Head of caudate nucleus (tissue), 42 donors: ENCODE measurements at regions of chr4 and their contacts with region 1.

Region 1: GRCh38 chr4:16001484-16001858 is 38.5 kb upstream of the FGFBP2 start:
- DNase-seq: peak in 41 of 42 donors; percentile 33 to 86 (median 65)

Region 2: DNA sequence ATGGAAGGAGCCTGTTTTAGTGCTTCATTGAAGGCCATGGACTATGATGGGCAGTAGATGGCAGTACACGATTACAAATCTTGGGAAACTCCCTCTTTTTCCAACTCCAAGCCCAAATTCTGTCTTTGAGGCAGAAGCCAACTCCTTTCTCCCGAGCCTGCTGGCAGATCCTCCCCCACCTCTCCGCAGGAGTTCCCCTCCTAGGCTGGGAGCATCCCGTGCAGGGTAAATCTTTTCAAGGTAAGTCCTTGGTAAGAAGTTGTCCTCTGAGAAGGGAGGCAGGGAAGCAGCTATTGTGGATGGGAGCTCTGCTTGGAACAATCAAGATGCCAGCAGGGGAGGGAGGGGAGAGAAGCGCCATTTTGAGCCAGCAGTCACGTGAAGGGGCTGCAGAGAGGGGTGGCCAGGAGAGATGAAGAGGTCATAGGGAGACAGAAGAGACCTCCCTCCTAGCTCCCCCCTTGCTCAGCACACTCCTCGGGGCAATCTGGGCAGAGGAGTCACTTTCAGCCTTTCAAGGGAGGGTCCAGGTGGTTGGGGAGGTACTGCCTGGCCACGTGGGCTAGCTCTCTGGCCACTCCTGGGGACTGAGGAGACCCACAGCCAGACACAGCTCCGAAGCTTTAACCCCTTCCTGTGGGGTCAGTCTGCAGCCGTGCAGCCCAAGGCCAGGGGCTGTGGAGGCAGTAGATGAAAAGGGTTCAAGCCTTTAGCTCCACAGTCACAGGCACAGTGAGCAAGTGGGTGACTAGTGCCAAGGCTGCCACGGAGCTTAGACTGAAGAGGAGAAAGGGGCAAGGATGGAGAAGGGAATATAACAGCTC is 522.2 kb before region 1 on chr4:
- intact Hi-C with region 1: loop called (anchors 5 kb)
- DNase-seq: peak; percentile 42 to 89 (median 70)

Region 3: DNA sequence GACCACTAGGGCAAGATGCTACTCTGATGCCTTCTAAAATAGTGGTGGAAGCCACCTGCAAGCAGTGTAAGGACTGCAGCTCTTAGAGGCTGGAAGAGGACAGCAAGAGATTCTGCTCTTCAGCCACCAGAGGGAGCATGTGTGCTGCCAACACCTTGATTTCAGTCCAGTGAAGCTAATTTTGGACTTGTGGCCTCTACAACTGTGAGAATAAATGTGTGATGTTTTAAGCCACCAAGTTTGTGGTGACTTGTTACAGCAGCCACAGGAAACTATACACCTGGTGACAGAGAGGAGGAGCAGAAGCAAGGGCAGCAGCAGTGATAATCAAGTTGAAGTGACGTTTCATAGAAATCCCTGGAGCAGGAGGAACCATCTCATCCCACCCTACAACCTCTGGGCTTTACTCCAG is 118.8 kb before region 1 on chr4:
- intact Hi-C with region 1: loop called (anchors 5 kb)
- DNase-seq: peak in 38 of 42 donors; percentile 9 to 75 (median 42)